Activated CD4-positive, alpha-beta T cell treated with anti-CD3 and anti-CD28 coated beads, Interleukin-2, amount 10 ng/mL, durations not matched to agents 24 days and 14 days (primary cell): ENCODE measurements at regions of chr1 and their contacts with region 1.

Region 1: DNA sequence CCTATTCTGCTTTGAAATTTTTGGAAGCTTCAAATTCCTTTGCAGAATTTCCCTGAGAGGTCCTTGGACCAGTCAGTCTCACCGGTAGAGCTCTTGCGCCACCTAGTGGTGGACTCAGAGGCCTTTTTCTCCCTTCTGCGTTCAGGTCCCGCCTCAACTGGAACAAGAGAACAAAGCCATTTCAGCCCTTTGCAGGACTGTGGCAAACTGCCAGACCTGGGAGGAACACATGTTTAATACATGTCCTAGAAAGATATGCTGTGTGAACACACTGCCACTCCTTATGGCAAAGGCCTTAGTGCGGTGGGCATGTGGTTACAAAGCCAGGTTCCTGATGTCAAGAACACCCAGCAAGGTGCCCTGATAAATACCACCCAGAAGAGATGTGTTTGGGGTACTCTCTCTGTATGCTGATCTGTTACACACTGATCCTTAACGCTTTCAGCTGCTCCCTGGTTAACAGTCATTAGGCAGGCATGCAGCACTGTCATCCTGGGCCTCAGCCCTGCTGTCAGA is 82.2 kb upstream of the SSX2IP start:
- DNase-seq: peak; percentile 88
- H3K4me3 Mint-ChIP-seq: no peak overlapping the region
- H3K27ac Mint-ChIP-seq: no peak overlapping the region
- H3K4me1 Mint-ChIP-seq: peaks cover 3% of the 10 kb centered on the region
- H3K27me3 Mint-ChIP-seq: peaks cover 25% of the 10 kb centered on the region

Region 2: GRCh38 chr1:83905315-83905907 is 867.1 kb before region 1 on chr1:
- intact Hi-C with region 1: loop called (anchors 5 kb)
- DNase-seq: peak; percentile 69
- H3K4me3 Mint-ChIP-seq: no peak overlapping the region
- H3K27ac Mint-ChIP-seq: no peak overlapping the region
- H3K4me1 Mint-ChIP-seq: no peaks in the 10 kb centered on the region
- H3K27me3 Mint-ChIP-seq: peaks cover 19% of the 10 kb centered on the region

Region 3: GRCh38 chr1:84442256-84442655 is 330.2 kb before region 1 on chr1:
- intact Hi-C with region 1: loop called (anchors 1 kb)
- DNase-seq: peak; percentile 80
- H3K4me3 Mint-ChIP-seq: peak overlapping the region; percentile 28
- H3K27ac Mint-ChIP-seq: peak overlapping the region; percentile 69
- H3K4me1 Mint-ChIP-seq: peaks cover 16% of the 10 kb centered on the region
- H3K27me3 Mint-ChIP-seq: peaks cover 15% of the 10 kb centered on the region

Region 4: GRCh38 chr1:84936116-84936810 is 163.8 kb after region 1 on chr1:
- intact Hi-C with region 1: loop called (anchors 1 kb)
- DNase-seq: peak; percentile 82
- H3K4me3 Mint-ChIP-seq: no peak overlapping the region
- H3K27ac Mint-ChIP-seq: no peak overlapping the region
- H3K4me1 Mint-ChIP-seq: peaks cover 4% of the 10 kb centered on the region
- H3K27me3 Mint-ChIP-seq: no peaks in the 10 kb centered on the region